ENCODE measurements at regions of chr3 and their contacts with region 1.

Region 1: DNA sequence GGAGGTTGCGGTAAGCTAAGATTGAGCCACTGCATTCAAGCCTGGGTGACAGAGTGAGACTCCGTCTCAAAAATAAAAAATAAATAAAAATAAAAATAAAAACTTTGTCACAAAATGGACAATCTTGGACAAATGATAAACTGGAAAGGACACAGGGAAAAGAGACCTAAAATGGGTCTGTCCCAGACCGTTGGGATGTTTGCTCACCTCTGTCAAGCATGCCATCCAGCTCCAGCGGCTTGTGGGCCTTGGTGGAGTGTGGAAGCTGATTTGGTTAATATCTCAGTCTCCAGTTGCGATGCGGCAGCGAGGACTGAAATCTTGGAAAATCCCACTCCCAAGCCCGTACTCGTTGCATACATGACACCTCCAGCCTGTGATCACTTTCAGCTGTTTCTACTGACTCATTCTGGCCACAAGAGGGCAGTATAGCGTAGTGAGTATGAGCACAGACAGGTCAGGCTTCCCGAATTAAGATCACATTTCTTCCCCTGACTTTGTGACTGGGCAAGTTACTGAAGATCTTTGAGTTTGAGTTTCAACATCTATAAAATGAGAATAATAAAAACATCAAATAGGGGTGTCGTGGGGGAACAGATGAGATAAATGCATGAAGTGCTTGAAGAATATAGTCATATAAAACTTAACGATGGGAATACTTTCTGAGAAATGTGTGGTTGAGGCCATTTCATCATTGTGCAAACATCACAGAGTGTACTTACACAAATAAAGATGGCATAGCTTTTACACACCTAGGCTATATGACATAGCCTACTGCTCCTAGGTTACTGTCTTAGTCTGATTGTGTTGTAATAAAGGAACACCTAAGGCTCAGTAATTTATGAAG is 19.6 kb upstream of the MOBP start:
- DNase-seq: peak; percentile 44 to 50
- ATAC-seq: peak; percentile 98
- H3K4me3 ChIP-seq: no peak overlapping the region
- H3K27ac ChIP-seq: no peak overlapping the region
- H3K4me1 ChIP-seq: no peaks in the 10 kb centered on the region
- H3K27me3 ChIP-seq: no peaks in the 10 kb centered on the region
- CTCF ChIP-seq: peak; percentile 71 to 88 (median 78)
- POLR2A ChIP-seq: no peak

Region 2: GRCh38 chr3:38528457-38528856 is 919.4 kb before region 1 on chr3:
- in situ Hi-C with region 1: no loop called
- intact Hi-C with region 1: loop called (anchors 10 kb)
- DNase-seq: no peak
- ATAC-seq: no peak
- H3K4me3 ChIP-seq: no peak overlapping the region
- H3K27ac ChIP-seq: no peak overlapping the region
- H3K4me1 ChIP-seq: no peaks in the 10 kb centered on the region
- H3K27me3 ChIP-seq: no peaks in the 10 kb centered on the region
- CTCF ChIP-seq: no peak
- POLR2A ChIP-seq: no peak

Region 3: DNA sequence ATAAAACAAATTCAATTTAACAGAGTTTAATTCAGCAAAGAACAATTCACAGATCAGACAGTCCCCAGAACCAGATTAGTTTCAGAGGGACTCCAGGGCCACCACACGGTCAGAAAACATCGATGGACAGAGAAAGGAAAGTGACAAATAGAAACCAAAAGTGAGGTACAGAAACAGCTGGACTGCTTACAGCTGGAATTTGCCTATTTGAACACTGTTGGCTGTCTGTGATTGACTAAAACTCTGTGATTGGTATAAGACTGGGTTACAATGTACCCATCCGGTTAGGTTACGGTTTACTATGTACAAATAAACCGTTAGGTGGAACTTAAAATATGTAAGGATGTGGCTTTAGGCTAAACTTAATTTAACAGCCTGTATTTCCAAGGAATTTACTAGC is 49.9 kb after region 1 on chr3:
- in situ Hi-C with region 1: no loop called
- intact Hi-C with region 1: loop called (anchors 1 kb)
- DNase-seq: no peak
- ATAC-seq: no peak
- H3K4me3 ChIP-seq: no peak overlapping the region
- H3K27ac ChIP-seq: no peak overlapping the region
- H3K4me1 ChIP-seq: no peaks in the 10 kb centered on the region
- H3K27me3 ChIP-seq: peaks cover 5 to 18% (median 9%) of the 10 kb centered on the region in 3 donors
- CTCF ChIP-seq: no peak
- POLR2A ChIP-seq: no peak